CD4-positive, alpha-beta T cell (primary cell): ENCODE measurements at regions of chr2 and their contacts with region 1.

Region 1: DNA sequence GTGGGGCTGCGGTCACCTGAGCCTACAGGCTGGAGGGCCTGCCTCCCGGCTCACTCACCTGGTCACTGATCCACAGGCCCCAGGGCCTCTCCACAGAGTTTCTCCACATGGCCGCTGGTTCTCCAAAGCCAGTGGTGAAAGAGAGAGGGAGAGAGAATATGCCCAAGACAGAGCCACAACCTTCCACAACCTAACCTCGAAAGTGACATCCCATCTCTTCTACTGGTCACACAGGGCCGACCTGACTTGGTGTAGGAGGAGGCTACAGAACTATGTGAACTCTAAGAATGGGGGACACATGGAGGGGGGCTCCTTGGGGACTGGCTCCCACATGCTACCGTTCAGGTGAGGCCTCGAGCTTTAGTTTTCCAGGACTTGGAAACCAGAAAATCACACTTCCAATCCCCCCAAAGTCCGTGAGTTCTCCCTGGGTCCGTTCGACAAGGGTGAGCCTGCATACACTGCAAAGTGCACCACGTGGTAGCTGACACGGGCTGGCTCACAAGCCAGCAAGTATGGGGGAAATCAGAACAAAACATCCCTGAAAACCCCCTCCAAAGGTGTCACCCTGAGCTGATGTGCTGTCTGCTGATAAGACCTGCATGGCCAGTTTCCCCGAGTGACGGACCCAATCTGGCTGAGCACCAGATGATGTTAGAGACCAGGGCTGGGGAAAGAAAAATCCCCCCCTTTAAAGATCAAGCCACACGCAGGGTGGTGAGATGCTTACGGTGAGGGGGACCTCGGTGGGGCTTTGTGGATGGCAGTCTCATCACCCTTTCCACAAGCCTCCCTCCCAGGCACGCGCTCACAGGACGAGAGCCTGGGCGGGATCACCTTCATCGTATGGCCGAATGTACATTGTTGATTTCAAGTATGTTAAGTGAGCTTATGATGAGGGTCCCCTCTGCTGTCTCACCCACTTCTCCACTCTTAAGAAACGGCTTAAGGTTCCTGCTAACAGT is 54.2 kb upstream of the SEMA4C start:
- DNase-seq: peak in 9 of 14 experiments; percentile 20 to 58 (median 39)
- ATAC-seq: peak; percentile 71
- H3K4me3 ChIP-seq: peak overlapping the region; percentile 48
- H3K4me3 Mint-ChIP-seq: peak overlapping the region; percentile 79
- H3K27ac ChIP-seq: peak overlapping the region; percentile 26 to 51
- H3K27ac Mint-ChIP-seq: peak overlapping the region; percentile 92
- H3K4me1 ChIP-seq: peaks cover 28% of the 10 kb centered on the region
- H3K4me1 Mint-ChIP-seq: peaks cover 37% of the 10 kb centered on the region
- H3K27me3 ChIP-seq: no peaks in the 10 kb centered on the region
- H3K27me3 Mint-ChIP-seq: no peaks in the 10 kb centered on the region
- CTCF ChIP-seq: no peak

Region 2: DNA sequence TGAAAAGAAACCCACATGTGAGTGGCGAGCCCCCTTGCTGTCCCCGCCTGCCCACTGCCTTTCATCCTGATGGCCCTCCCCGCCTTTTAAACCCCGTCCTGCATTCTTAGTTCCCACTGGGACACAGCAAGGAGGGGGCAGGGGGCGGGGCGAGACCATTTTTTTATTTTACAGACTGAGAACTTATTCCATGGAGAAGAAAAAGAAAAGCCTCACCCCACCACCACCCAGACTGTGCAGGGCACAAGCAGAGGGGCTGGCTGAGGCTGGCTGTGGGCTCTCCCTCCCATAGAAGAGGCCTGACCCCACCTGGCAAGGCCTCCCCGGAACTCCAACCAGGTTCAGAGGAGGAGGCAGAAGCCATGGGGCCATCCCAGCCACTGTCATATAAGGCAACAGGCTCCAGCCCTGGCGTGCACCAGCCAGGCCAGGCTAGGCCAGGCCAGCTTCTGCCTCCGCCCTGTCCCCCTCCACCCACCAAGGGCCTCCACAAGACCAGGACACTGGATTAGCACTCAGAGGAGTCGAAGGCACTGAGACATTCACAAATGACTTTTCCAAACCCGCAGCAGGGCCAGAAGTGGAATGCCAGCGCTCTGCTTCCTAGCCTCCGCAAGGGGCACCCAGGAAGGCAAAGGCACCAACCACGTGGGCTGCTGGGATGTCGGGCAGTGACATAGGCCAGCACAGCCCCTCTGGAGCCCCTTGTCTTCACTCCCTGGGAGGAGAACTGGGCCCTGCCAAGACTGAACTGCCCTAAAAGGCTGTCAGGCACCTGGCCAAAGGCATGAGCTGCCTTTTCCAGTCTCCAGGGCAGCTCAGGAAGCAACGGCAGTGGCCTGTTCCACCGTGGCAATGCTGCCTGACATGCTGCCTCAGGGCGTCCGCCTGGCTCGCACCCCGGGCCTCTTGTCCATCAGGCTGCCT is 16.7 kb before region 1 on chr2:
- CTCF ChIA-PET with region 1: no interaction called
- POLR2A ChIA-PET with region 1: interaction called, 29 read pairs
- intact Hi-C with region 1: loop called in 1 of 2 experiments (anchors 2 kb)
- DNase-seq: no peak
- ATAC-seq: no peak
- H3K4me3 ChIP-seq: no peak overlapping the region
- H3K4me3 Mint-ChIP-seq: no peak overlapping the region
- H3K27ac ChIP-seq: no peak overlapping the region
- H3K27ac Mint-ChIP-seq: no peak overlapping the region
- H3K4me1 ChIP-seq: peaks cover 17% of the 10 kb centered on the region
- H3K4me1 Mint-ChIP-seq: peaks cover 30% of the 10 kb centered on the region
- H3K27me3 ChIP-seq: no peaks in the 10 kb centered on the region
- H3K27me3 Mint-ChIP-seq: no peaks in the 10 kb centered on the region
- CTCF ChIP-seq: no peak

Region 3: DNA sequence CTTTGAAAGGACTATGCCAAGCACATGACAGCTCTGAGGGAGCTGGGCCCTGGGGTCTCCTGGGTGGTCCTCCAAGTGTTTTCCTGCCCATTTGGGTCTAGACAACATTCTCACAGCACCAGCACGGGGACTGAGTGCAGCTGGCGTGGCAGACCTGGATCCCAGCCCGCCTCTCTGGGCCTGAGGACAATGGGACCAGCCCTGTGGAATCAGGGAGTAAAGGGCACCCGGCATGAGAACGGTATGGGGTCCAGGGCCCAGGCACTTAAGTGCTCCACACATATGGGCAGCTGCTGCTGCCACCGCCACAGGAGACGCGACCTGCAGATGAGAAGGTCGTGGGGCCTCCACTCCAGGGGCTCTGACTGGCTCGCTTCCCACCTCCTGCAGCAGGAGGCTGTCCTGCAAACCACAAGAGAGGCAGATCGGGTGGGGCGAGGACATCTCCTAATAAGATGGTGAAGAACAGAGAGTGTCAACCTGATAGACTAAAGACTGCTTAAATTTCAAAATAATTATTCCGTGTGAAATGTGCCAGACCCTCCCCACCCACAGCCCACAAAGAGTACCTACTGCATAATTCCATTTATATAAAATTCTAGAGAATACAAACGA is 16.0 kb after region 1 on chr2:
- CTCF ChIA-PET with region 1: no interaction called
- POLR2A ChIA-PET with region 1: interaction called, 10 read pairs
- intact Hi-C with region 1: no loop called
- DNase-seq: no peak
- ATAC-seq: no peak
- H3K4me3 ChIP-seq: no peak overlapping the region
- H3K4me3 Mint-ChIP-seq: peak overlapping the region; percentile 30
- H3K27ac ChIP-seq: no peak overlapping the region
- H3K27ac Mint-ChIP-seq: peak overlapping the region; percentile 75
- H3K4me1 ChIP-seq: peaks cover 27% of the 10 kb centered on the region
- H3K4me1 Mint-ChIP-seq: peaks cover 38% of the 10 kb centered on the region
- H3K27me3 ChIP-seq: no peaks in the 10 kb centered on the region
- H3K27me3 Mint-ChIP-seq: no peaks in the 10 kb centered on the region
- CTCF ChIP-seq: no peak